Right ventricle myocardium inferior (tissue), 1 donor: ENCODE measurements at regions of chrX and their contacts with region 1.

Region 1: DNA sequence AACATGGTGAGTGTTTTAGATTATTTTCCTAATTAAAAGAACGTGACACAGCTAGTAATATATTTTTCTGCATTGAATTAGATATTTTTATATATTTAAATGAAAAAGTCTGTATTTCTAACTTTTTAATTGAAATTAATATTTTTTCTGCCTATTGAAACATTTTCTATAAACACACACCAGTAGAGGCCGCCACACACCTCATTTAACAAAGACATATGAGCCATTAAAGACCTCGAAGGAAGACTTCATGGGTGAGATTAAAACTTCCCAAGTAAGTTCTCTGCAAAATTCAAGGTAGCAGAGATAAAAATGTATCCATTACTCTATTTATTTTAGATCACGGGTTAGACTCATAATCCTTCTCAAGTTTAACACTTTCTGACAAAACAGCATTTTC is 8.3 kb downstream of the SLITRK2 start:
- DNase-seq: no peak
- ATAC-seq: no peak

Region 2: DNA sequence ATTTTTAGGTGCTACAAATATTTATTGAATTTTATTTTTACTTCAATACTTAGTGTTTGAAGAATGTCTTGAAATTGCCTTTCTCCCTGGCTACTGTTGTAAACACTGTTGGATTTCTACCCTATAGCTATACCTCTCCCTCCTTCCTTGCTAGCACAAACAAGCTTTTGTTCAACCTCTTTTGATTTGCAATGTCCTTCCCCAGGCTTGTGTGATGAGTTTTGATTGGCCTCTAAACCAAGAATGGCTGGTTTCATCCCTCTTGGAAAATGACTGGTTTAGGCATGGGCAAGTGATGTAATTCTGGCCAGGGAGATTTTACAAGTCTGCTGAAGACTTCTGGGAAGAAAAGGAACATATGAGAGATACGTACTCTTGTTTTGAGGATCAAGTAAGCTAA is 33.6 kb before region 1 on chrX:
- intact Hi-C with region 1: no loop called
- DNase-seq: no peak
- ATAC-seq: no peak

Region 3: GRCh38 chrX:145910017-145910416 is 84.1 kb after region 1 on chrX:
- intact Hi-C with region 1: loop called (anchors 10 kb)
- DNase-seq: no peak
- ATAC-seq: no peak

Region 4: GRCh38 chrX:146351620-146352019 is 525.7 kb after region 1 on chrX:
- intact Hi-C with region 1: no loop called
- DNase-seq: no peak
- ATAC-seq: no peak